HEK293 (cell line): ENCODE measurements at regions of chr10 and their contacts with region 1.

Region 1: GRCh38 chr10:29496341-29497162 is 138.2 kb downstream of the SVIL start:
- H3K4me3 ChIP-seq: no peak overlapping the region
- H3K27ac ChIP-seq: no peak overlapping the region
- H3K4me1 ChIP-seq: no peaks in the 10 kb centered on the region
- CTCF ChIP-seq: peak; percentile 63

Region 2: DNA sequence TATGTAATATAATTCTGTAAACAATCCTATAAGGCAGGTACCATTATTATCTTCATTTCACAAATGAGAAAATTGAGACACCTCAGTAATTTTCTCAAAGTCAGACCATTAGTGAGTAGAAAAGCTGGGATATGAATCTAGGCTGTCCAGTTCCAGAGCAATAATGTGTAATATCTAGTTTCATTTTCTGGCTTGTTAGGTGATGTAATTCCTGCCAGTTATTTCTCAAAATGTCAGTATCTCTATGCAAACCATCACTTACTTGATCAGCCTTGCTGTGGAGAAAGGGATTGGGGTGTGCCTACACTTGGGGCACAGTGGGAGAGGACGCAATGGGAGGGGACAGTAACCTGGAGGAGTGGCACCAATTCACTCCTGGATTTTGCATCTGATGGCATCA is 50.2 kb before region 1 on chr10:
- CTCF ChIA-PET with region 1: interaction called, 14 read pairs
- POLR2A ChIA-PET with region 1: no interaction called
- H3K4me3 ChIP-seq: no peak overlapping the region
- H3K27ac ChIP-seq: no peak overlapping the region
- H3K4me1 ChIP-seq: no peaks in the 10 kb centered on the region
- CTCF ChIP-seq: no peak

Region 3: GRCh38 chr10:29470355-29470705 is 26.2 kb before region 1 on chr10:
- CTCF ChIA-PET with region 1: interaction called, 10 read pairs
- POLR2A ChIA-PET with region 1: no interaction called
- H3K4me3 ChIP-seq: no peak overlapping the region
- H3K27ac ChIP-seq: no peak overlapping the region
- H3K4me1 ChIP-seq: no peaks in the 10 kb centered on the region
- CTCF ChIP-seq: no peak

Region 4: GRCh38 chr10:29482591-29483431 is 13.7 kb before region 1 on chr10:
- CTCF ChIA-PET with region 1: interaction called, 19 read pairs
- POLR2A ChIA-PET with region 1: no interaction called
- H3K4me3 ChIP-seq: no peak overlapping the region
- H3K27ac ChIP-seq: no peak overlapping the region
- H3K4me1 ChIP-seq: no peaks in the 10 kb centered on the region
- CTCF ChIP-seq: no peak

Region 5: DNA sequence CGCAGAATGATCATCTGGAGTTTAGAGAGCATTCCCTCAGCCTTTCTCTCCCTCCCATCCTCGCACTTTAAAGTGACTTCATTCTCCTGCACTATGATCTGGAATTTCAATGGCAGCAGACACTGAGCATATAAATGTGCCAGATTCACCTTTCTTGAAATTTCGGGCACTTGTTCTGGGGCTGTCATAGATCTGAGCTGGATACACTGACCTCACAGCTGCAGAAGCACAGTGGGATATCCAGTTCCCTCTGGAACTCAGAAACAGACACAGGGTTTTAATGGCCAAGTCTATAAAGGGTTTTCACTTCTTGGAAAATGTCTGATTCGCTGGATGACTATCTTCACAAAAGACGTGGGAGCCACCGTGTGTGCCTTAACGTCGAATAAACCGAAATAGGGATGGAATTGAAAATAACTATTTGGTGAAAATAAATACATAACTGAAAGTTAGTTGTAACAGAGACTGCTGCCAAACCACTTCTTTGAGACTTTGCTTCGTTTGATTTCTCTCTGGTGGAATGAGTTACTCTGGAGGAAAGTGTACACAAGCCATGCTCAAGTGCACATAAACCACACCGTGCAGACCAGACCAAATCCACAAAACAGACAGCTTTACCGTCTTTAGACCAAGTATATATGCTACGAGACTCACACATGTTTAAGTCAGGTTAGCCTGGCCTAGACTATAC is 12.1 kb after region 1 on chr10:
- CTCF ChIA-PET with region 1: interaction called, 28 read pairs
- POLR2A ChIA-PET with region 1: no interaction called
- H3K4me3 ChIP-seq: no peak overlapping the region
- H3K27ac ChIP-seq: no peak overlapping the region
- H3K4me1 ChIP-seq: no peaks in the 10 kb centered on the region
- CTCF ChIP-seq: no peak

Region 6: GRCh38 chr10:29517352-29517923 is 20.9 kb after region 1 on chr10:
- CTCF ChIA-PET with region 1: interaction called, 28 read pairs
- POLR2A ChIA-PET with region 1: no interaction called
- H3K4me3 ChIP-seq: no peak overlapping the region
- H3K27ac ChIP-seq: no peak overlapping the region
- H3K4me1 ChIP-seq: no peaks in the 10 kb centered on the region
- CTCF ChIP-seq: 0 out of 2 replicates have a peak, but pooled peaks have one; percentile 19